AG04450 (cell line): ENCODE measurements at regions of chr15 and their contacts with region 1.

Region 1: DNA sequence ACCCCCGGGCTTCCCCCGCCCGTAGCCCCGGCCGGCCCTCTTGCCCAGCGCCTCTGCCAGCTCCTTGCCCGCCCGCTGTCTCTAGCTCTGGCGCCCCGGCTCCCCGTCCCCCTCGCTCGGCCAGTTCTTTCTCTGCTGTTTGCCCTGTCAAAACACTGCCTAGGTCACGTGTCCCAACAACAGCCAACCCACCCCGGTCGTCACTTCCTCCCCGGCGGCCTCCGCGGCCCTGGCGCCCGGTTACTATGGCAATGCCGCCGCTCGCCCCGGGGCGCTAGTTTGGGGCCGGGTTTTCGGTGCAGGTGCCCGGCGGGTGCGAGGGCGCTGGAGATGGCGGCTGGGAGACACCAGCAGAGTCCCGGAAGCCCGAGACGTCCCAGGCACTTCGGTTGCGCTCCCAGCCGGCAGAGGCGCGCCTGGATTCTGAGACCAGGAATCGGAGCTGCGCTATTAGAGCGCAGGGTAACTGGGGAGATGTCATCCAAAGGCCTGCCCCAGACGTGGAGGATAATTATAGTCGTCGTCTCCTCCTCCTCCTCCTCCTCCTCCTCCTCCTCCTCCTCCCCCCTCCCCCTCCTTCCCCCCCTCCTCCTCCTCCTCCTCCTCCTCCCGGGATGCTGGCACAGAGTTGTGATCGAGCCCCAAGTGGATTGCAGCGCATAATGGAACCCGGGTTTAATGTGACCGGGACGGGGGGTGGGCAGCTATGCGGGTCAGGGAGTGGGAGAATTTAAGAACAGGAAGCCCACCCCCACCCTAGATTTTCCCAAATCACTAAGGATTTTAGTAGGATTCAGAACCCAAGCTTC is at the start of gene ATOSA:
- DNase-seq: peak; percentile 42
- H3K4me3 ChIP-seq: peak within 1 kb of the TSS; percentile 89
- H3K27ac ChIP-seq: peak within 1 kb of the TSS; percentile 85
- H3K27me3 ChIP-seq: no peaks in the 10 kb centered on the region
- CTCF ChIP-seq: 0 out of 2 replicates have a peak, but pooled peaks have one; percentile 10
- polyA plus RNA-seq, gene ATOSA: 20.9 and 23.9 TPM in 2 replicates

Region 2: GRCh38 chr15:52636459-52636858 is 43.0 kb before region 1 on chr15:
- CTCF ChIA-PET with region 1: interaction called, 3 read pairs
- POLR2A ChIA-PET with region 1: interaction called, 10 read pairs
- DNase-seq: peak; percentile 41
- H3K4me3 ChIP-seq: no peak overlapping the region
- H3K27ac ChIP-seq: no peak overlapping the region
- H3K27me3 ChIP-seq: no peaks in the 10 kb centered on the region
- CTCF ChIP-seq: no peak